ENCODE measurements at regions of chr22 and their contacts with region 1.

Region 1: GRCh38 chr22:22181341-22181850 is 63.2 kb upstream of the VPREB1 start:
- DNase-seq: no peak
- H3K4me3 ChIP-seq: no peak overlapping the region
- H3K27ac ChIP-seq: no peak overlapping the region
- H3K4me1 ChIP-seq: no peaks in the 10 kb centered on the region
- H3K27me3 ChIP-seq: peaks cover 86 to 100% (median 98%) of the 10 kb centered on the region in 4 experiments
- CTCF ChIP-seq: no peak
- EP300 ChIP-seq: no peak
- POLR2A ChIP-seq: no peak
- RAD21 ChIP-seq: no peak

Region 2: GRCh38 chr22:22156716-22157347 is 24.6 kb before region 1 on chr22:
- CTCF ChIA-PET with region 1: interaction called, 10 read pairs
- POLR2A ChIA-PET with region 1: no interaction called
- DNase-seq: peak; percentile 21 to 69
- H3K4me3 ChIP-seq: no peak overlapping the region
- H3K27ac ChIP-seq: no peak overlapping the region
- H3K4me1 ChIP-seq: no peaks in the 10 kb centered on the region
- H3K27me3 ChIP-seq: peaks cover 60 to 79% (median 73%) of the 10 kb centered on the region in 4 experiments
- CTCF ChIP-seq: peak; percentile 46 to 71 (median 70)
- EP300 ChIP-seq: no peak
- POLR2A ChIP-seq: no peak
- RAD21 ChIP-seq: peak; percentile 69 to 71

Region 3: DNA sequence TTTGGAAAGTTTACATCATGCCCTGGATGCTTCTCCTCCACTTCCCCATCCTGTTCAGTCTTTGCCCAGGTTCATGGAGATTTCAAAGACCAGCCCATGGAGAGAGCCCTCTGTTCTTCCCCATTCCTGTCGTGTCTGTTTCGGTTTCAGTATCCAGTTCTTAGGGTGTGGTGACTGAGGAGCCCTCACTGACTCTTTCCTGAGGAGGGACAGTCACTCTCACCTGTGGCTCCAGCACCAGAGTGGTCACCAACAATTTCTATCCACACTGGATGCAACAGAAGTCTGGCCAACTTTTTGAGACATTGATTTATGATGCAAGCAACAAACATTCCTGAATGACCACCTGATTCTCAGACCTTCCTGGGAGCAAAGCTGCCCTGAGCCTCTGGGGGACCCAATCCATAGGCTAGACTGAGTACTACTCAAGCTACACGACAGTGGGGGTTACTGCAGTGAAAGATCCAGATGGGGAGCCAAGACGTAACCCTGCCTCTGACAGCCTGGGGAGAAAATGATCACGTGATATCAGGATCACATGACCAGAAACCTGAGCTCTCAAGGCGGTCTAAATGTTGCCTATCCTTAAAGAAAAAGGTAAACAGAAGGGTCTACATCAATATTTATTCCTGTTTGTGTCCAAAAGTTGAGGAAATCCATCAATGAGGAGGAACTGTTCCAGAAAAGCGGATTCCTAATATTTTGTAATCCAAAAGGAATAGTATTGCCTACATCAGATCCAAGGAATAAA is 13.0 kb before region 1 on chr22:
- CTCF ChIA-PET with region 1: interaction called, 91 read pairs
- POLR2A ChIA-PET with region 1: no interaction called
- DNase-seq: no peak
- H3K4me3 ChIP-seq: peak overlapping the region in 2 of 4 experiments; percentile 10 to 39; a peak in 2 of 8 replicates
- H3K27ac ChIP-seq: no peak overlapping the region
- H3K4me1 ChIP-seq: no peaks in the 10 kb centered on the region
- H3K27me3 ChIP-seq: peaks cover 70 to 94% (median 90%) of the 10 kb centered on the region in 4 experiments
- CTCF ChIP-seq: no peak
- EP300 ChIP-seq: no peak
- POLR2A ChIP-seq: no peak
- RAD21 ChIP-seq: no peak

Region 4: DNA sequence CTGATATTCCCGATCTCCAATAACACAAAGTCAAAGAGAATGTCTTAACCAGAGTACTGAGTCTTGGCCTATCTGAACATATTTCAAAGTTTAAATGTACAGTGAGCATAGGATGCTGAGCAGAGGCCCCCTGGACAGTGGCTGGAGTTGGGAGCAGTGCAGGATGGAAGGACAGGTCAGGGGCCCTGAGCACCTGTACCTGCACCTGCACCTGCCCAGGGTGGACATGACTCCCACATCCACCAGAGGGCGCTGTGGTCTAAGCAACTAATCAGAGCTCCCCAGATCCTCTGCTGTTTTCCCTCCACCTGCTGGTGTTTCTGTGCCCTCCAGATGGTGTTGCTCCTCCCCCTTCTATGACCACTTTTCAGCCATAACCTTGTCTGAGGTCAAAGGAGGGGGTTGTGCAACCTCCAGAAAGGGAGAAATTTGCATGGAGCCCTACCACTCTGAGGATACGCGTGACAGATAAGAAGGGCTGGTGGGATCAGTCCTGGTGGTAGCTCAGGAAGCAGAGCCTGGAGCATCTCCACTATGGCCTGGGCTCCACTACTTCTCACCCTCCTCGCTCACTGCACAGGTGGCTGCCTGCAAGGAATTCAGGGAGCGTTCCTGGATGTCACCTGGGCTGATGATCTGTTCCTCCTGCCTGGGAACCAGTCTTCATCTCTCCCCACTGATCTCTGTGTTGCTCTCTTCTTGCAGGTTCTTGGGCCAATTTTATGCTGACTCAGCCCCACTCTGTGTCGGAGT is 14.0 kb after region 1 on chr22:
- CTCF ChIA-PET with region 1: interaction called, 46 read pairs
- POLR2A ChIA-PET with region 1: no interaction called
- DNase-seq: peak; percentile 64 to 95
- H3K4me3 ChIP-seq: no peak overlapping the region
- H3K27ac ChIP-seq: no peak overlapping the region
- H3K4me1 ChIP-seq: no peaks in the 10 kb centered on the region
- H3K27me3 ChIP-seq: peaks cover 58 to 66% (median 64%) of the 10 kb centered on the region in 4 experiments
- CTCF ChIP-seq: peak; percentile 94 to 98 (median 98)
- EP300 ChIP-seq: no peak
- POLR2A ChIP-seq: no peak
- RAD21 ChIP-seq: peak; percentile 86 to 87

Region 5: DNA sequence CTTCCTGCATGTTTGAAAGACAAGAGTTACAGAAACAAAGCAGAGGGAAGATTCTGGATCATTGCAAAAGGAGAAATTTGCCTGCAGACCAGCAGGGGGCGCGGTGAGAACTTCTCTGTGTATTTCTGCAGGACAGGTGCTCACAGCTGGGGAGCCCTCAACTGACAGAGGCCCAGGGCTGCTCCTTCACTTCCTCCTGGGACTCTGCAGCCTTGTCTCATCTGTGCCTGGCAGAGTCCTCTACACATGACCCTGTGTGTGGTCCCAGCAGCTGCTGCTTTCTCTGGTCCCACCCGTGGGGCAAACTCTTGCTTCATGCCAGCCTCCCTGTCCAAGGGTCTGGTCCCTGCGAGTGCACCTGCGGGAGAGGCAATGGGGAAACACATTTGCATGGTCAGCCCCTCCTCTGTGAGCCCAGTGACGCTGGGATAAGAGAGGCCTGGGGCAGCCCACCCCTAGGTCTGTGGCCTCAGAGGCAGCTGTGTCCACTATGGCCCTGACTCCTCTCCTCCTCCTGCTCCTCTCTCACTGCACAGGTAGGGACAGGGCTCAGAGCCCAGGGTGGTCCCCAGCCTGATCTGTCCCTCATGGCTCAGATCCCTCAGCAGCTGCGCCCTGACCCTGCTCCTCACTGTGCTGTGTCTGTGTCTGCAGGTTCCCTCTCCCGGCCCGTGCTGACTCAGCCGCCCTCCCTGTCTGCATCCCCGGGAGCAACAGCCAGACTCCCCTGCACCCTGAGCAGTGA is 20.0 kb after region 1 on chr22:
- CTCF ChIA-PET with region 1: interaction called, 46 read pairs
- POLR2A ChIA-PET with region 1: no interaction called
- DNase-seq: peak; percentile 19 to 87
- H3K4me3 ChIP-seq: no peak overlapping the region
- H3K27ac ChIP-seq: no peak overlapping the region
- H3K4me1 ChIP-seq: no peaks in the 10 kb centered on the region
- H3K27me3 ChIP-seq: peaks cover 88 to 99% (median 97%) of the 10 kb centered on the region in 4 experiments
- CTCF ChIP-seq: peak; percentile 67 to 86 (median 72)
- EP300 ChIP-seq: no peak
- POLR2A ChIP-seq: no peak
- RAD21 ChIP-seq: peak; percentile 30 to 40; a peak in 2 of 4 replicates

Region 6: GRCh38 chr22:22207845-22208564 is 26.6 kb after region 1 on chr22:
- CTCF ChIA-PET with region 1: interaction called, 46 read pairs
- POLR2A ChIA-PET with region 1: no interaction called
- DNase-seq: peak; percentile 36 to 92
- H3K4me3 ChIP-seq: no peak overlapping the region
- H3K27ac ChIP-seq: no peak overlapping the region
- H3K4me1 ChIP-seq: no peaks in the 10 kb centered on the region
- H3K27me3 ChIP-seq: peaks cover 78 to 99% (median 89%) of the 10 kb centered on the region in 4 experiments
- CTCF ChIP-seq: peak; percentile 74 to 86 (median 81)
- EP300 ChIP-seq: no peak
- POLR2A ChIP-seq: no peak
- RAD21 ChIP-seq: peak; percentile 85 to 86

Measured in H1 (cell line).